ENCODE measurements at regions of chr6 and their contacts with region 1.

Region 1: DNA sequence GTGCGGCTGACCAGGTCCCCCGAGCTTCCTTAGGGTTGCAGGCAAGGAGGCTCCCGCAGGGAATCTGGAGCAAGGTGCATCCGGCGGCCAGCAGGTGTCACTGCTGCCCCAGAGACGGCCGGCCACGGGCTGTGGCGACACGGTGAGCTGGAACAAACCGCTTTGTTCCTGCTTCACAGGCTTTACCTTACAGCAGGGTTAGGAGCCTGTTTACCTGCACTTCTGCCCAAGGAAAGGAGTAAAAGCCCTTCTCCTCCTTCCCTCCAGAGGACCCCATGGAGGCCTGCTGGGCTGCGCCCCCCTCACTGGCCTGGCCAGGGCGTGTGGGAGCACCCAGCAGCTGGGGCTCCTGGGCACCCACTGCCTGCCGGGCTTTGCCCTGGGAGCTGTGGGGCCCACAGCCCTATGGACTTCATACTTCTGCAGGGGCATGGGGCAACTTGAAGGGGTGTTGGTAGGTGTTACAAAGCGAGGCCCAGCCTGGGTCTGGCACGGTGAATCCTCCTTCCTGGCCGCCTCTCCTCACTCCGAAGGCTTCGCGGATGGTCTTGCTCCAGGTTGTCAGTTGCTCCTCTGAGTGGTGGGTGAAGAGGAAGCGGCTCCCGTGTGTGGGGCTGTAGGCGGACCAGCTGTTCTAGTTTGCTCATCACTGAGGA is 88.4 kb downstream of the CDC5L start:
- DNase-seq: peak; percentile 73 to 94
- H3K4me3 ChIP-seq: no peak overlapping the region
- H3K27ac ChIP-seq: peak overlapping the region; percentile 66; the same call in 1 of the 2 replicates
- H3K4me1 ChIP-seq: peaks cover under 1 to 15% (median 11%) of the 10 kb centered on the region in 4 experiments
- H3K27me3 ChIP-seq: no peaks in the 10 kb centered on the region
- CTCF ChIP-seq: peak in 2 of 3 experiments; percentile 92 to 98; a peak in 3 of 4 replicates
- EP300 ChIP-seq: peak in 1 of 2 experiments; percentile 62; a peak in 1 of 3 replicates
- POLR2A ChIP-seq: peak in 1 of 2 experiments; percentile 25; a peak in 2 of 3 replicates
- RAD21 ChIP-seq: peak; percentile 99 to 100

Region 2: DNA sequence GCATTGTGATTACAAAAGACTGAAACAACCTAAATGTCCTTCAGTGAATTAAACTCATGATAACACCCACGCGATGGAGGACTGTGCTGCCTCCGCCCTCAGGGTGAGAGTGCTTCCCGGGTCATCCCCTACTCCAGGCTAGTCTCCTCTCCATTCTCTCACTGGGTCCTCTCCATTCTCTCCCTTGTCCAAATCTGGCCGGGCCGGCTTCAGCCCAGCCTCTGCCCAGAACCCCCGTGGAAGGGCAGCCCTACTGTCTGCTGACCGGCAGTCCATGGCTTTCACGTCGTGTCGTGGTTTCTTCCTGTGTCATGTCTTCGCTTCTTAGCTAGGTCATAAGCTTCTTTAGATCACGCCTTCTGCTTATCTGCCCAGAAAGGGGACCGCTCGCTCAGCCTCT is 13.6 kb before region 1 on chr6:
- CTCF ChIA-PET with region 1: interaction called, 41 read pairs
- POLR2A ChIA-PET with region 1: interaction called, 4 read pairs
- DNase-seq: no peak
- H3K4me3 ChIP-seq: no peak overlapping the region
- H3K27ac ChIP-seq: no peak overlapping the region
- H3K4me1 ChIP-seq: no peaks in the 10 kb centered on the region
- H3K27me3 ChIP-seq: no peaks in the 10 kb centered on the region; a peak in 1 of 7 replicates
- CTCF ChIP-seq: no peak
- EP300 ChIP-seq: no peak
- POLR2A ChIP-seq: no peak
- RAD21 ChIP-seq: no peak

Region 3: DNA sequence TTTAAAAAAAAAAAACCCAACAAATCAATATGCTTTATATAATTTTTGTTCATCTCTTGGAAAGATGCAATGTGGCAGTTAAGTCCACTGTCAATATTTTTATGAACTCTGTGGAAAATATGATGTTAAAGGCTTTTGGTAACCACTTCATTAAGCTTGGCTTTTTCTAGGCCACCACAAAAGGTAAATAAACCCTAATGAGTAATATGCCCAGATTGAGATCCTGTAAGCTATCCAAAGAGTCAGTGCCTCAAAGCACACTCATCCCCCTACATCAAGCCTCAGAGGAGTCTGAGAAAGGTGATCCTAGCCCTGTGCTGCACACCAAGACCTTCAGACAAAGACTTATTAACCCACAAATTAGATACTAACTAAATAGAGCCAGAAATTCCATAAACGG is 32.7 kb after region 1 on chr6:
- CTCF ChIA-PET with region 1: interaction called, 20 read pairs
- POLR2A ChIA-PET with region 1: no interaction called
- DNase-seq: no peak
- H3K4me3 ChIP-seq: no peak overlapping the region
- H3K27ac ChIP-seq: no peak overlapping the region
- H3K4me1 ChIP-seq: no peaks in the 10 kb centered on the region
- H3K27me3 ChIP-seq: no peaks in the 10 kb centered on the region
- CTCF ChIP-seq: no peak
- EP300 ChIP-seq: no peak
- POLR2A ChIP-seq: no peak
- RAD21 ChIP-seq: no peak

Region 4: DNA sequence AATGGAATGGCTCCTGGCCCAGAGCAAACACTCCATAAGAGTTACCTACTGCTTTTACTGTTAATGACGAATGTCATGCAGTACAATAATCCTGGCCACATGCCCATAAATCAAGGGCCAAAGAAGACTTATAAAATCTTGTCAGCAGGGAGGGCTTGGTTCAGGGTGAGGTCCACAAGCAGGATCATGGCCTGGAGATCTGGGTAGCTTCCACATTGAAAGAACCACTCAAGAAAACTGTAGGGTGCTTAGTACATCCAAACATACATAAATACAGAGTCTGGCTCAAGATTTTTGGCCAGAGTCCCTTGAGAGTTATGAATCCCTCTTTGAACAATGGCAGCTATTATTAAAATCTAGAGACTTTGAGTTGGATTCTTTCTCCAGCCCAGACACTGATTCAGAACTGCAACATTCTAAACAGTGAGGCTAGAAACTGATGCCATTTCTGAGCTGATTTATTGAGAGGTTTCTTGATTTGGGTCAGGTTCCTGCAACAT is 100.3 kb after region 1 on chr6:
- CTCF ChIA-PET with region 1: interaction called, 12 read pairs
- POLR2A ChIA-PET with region 1: no interaction called
- DNase-seq: no peak
- H3K4me3 ChIP-seq: no peak overlapping the region
- H3K27ac ChIP-seq: no peak overlapping the region
- H3K4me1 ChIP-seq: no peaks in the 10 kb centered on the region
- H3K27me3 ChIP-seq: no peaks in the 10 kb centered on the region
- CTCF ChIP-seq: no peak
- EP300 ChIP-seq: no peak
- POLR2A ChIP-seq: no peak
- RAD21 ChIP-seq: no peak

Region 5: DNA sequence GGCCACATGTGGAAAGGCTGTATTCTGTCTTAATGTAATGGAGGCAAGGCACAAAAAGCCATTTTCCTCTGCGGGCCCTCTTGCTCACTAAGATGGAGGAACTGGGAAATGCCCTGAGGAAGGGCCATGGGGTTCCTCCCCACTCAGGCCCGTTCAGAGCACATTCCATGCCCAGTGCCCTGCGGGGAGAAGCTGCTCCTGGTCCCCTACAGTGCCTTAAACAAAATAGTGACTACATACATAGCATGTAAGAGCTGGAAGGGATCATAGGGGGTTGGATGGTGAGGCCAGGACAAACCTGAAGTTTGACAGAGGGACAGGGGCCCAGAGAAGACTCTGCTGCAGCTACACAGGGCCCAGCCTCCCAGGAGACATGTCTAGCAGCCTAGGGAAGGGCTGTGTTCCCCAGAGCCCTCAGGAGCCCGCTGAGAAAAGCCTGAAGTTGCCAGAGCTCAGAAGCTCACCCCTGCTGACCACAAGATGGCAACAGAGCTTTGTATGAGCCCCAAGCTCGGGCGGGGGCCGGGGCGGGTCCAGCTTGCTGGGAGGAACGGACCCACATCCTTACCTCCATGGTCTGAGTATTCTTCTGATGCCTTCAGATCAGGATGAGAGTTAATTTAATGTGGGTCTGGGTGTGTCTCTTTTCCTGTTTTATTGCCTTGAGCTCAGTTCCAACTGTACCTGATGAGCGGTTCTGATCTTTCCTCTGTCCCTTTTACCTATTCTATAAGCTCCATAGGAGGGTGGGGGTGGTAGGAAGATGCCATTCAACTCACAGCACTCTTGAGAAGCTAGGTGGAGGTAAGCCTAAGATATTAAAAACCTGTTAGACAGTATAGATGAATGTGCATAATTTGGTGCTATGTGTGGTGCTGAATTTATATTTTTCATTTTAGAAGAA is 154.5 kb after region 1 on chr6:
- CTCF ChIA-PET with region 1: interaction called, 135 read pairs
- POLR2A ChIA-PET with region 1: no interaction called
- DNase-seq: peak in 1 of 2 experiments; percentile 77
- H3K4me3 ChIP-seq: no peak overlapping the region
- H3K27ac ChIP-seq: no peak overlapping the region
- H3K4me1 ChIP-seq: peaks cover 8 to 19% (median 13%) of the 10 kb centered on the region in 4 experiments
- H3K27me3 ChIP-seq: peaks cover 0 to 4% (median 0%) of the 10 kb centered on the region in 4 experiments; a peak in 2 of 7 replicates
- CTCF ChIP-seq: peak; percentile 67 to 87 (median 80)
- EP300 ChIP-seq: no peak
- POLR2A ChIP-seq: no peak
- RAD21 ChIP-seq: peak; percentile 94 to 98

Measured in H1 (cell line).